PC-9 (cell line): ENCODE measurements at regions of chr3 and their contacts with region 1.

Region 1: DNA sequence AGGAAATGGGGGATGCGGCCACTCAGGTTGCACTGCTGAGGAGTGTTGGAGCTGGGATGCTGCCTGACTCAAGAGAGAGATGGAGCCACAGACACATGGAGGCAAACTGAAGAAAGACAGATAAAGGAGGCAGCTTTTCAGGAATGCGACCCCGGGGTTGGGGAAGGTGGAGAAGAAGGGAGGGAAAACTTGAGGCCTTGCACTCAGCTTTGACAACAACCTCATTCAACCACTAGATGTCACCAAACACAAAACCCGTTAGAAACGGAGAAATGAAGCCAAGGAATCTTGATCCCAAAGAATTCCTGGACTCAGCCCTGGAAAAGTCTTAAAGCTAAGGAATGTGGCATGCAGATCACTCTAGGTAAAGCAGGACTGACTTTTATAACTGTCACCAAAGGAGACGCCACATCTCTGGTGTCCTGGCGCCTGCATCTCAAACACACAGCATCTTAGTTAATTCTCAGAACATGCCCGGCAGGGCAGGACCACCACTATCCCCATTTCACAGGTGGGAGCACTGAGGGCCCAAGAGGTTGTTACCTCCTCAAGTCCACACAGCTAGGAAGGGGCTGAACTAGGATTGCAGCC is 59.6 kb upstream of the LMCD1 start:
- DNase-seq: peak in 1 of 2 experiments; percentile 8
- H3K4me3 ChIP-seq: no peak overlapping the region
- H3K27ac ChIP-seq: no peak overlapping the region
- H3K4me1 ChIP-seq: peaks cover 25% of the 10 kb centered on the region
- H3K27me3 ChIP-seq: no peaks in the 10 kb centered on the region
- CTCF ChIP-seq: peak; percentile 84

Region 2: DNA sequence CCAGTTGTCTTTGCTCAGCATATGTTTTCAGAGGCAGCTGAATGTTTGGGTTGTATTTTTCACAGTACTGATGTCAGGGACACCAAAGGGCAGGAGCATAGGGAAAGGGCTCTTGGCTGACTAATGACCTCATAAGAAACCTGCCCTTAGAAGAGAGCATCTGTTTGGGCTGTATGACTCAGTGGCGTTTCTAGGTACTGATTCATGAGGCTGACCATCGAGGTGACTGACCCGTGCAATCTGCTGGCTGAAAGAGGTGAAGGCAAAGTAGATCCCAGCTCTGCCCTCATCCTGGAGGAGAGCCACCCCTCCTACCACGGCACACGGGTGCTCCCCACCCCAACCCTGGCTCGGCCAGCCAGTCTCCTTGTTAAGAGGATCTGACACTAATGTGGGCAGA is 67.9 kb after region 1 on chr3:
- CTCF ChIA-PET with region 1: no interaction called
- POLR2A ChIA-PET with region 1: no interaction called
- intact Hi-C with region 1: no loop called
- DNase-seq: peak; percentile 31 to 85
- H3K4me3 ChIP-seq: no peak overlapping the region
- H3K27ac ChIP-seq: peak overlapping the region; percentile 51
- H3K4me1 ChIP-seq: peaks cover 36% of the 10 kb centered on the region
- H3K27me3 ChIP-seq: no peaks in the 10 kb centered on the region
- CTCF ChIP-seq: no peak

Region 3: DNA sequence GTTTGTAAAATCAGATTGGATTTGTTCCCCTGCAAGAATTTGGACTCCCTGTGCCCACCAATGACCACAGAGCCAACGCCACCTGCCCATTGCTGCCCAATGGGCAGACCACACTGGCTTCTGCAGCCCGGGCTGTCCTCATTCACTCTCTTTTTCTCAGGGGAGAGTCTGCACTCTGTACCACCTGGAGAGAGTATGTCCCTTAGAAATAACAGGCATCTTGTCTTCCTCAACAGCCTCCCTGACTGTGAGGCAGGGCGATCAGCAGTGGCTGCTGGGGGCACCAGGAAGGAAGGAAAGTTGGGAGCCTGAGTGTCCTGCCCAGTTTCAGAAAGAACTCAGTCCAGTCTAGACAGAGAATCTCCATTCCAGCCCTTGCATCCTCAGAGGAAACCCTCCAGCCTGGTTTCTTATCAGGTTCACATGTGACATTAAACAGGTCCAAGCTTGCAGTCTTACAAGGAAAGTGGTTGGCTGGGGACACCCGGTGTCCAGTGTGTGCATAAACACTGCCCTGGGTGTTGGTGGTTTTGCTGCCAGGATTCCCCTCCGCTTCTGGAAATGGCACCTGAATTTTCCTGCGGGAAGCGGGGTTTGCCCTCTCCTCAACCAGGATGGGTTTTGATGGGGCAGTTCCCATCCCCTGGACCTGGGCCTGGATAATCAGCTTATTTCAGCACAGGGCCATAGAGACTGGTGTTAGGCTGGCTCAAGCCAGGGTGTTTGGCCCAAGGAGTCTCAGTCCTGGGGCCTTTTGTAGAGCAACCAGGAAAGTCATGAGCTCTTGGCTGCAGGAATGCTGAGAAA is 165.4 kb after region 1 on chr3:
- CTCF ChIA-PET with region 1: interaction called, 4 read pairs
- POLR2A ChIA-PET with region 1: no interaction called
- intact Hi-C with region 1: loop called (anchors 1 kb)
- DNase-seq: peak; percentile 38 to 46
- H3K4me3 ChIP-seq: no peak overlapping the region
- H3K27ac ChIP-seq: no peak overlapping the region
- H3K4me1 ChIP-seq: no peaks in the 10 kb centered on the region
- H3K27me3 ChIP-seq: no peaks in the 10 kb centered on the region
- CTCF ChIP-seq: peak; percentile 77